Body of pancreas (tissue), 4 donors: ENCODE measurements at regions of chr10 and their contacts with region 1.

Region 1: DNA sequence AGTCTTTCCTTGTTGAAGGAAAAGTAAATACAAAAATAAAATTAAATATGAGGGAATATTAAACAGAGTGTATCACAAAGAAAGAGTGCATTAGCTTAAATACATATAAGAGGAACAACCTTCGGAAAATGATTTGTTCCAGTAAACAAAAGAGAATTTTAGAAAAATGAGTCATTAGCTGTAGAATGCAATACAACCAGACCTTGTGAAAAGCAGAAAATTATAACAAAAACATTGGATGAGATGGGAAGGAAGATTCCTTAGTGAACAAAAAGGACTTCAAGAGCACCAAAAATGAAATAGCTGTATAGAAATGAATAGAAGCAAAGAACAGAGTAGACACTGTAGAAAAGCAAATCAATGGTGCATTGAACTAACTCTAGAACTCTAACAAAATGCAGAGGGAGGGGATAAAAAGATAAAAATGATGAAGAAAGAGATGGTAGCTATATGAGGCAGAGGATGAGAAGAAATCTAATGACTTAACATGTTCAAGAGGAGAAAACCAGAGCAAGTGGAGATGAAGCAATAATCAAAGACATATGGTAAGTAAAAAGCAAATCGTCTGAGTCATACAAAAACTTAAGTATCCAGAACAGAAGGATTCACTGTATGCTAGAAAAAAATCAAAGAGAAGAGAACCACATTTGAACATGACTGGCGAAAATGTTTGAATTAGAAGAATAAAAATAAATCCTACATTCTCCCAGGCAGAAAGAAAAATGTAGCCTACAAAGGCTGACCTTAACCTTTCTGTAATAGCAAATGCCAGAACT is 190.5 kb downstream of the TMEM26 start:
- DNase-seq: no peak
- ATAC-seq: no peak
- H3K4me3 ChIP-seq: no peak overlapping the region
- H3K27ac ChIP-seq: no peak overlapping the region
- H3K4me1 ChIP-seq: no peaks in the 10 kb centered on the region
- H3K27me3 ChIP-seq: no peaks in the 10 kb centered on the region
- CTCF ChIP-seq: no peak
- POLR2A ChIP-seq: no peak

Region 2: DNA sequence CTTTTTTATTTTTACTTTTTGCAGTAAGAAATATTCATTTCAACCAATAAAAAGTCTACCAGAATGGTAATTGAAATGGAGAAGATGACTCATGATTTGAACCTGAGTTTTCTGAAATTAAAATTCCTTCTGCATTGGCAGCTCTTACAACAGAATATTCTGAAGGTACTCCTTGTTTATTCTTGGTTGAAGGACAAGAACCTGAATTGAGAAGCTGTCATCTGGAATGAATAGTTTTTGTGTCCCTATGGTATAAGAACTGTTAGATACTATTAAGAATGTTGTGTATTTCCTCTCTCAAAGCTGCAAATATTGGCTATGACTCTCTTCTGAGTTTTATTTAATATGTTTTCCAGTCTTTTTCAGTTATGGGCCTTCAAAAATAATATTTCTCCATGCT is 428.3 kb before region 1 on chr10:
- intact Hi-C with region 1: loop called (anchors 10 kb)
- DNase-seq: no peak
- ATAC-seq: no peak
- H3K4me3 ChIP-seq: no peak overlapping the region
- H3K27ac ChIP-seq: no peak overlapping the region
- H3K4me1 ChIP-seq: no peaks in the 10 kb centered on the region
- H3K27me3 ChIP-seq: no peaks in the 10 kb centered on the region
- CTCF ChIP-seq: no peak
- POLR2A ChIP-seq: no peak

Region 3: DNA sequence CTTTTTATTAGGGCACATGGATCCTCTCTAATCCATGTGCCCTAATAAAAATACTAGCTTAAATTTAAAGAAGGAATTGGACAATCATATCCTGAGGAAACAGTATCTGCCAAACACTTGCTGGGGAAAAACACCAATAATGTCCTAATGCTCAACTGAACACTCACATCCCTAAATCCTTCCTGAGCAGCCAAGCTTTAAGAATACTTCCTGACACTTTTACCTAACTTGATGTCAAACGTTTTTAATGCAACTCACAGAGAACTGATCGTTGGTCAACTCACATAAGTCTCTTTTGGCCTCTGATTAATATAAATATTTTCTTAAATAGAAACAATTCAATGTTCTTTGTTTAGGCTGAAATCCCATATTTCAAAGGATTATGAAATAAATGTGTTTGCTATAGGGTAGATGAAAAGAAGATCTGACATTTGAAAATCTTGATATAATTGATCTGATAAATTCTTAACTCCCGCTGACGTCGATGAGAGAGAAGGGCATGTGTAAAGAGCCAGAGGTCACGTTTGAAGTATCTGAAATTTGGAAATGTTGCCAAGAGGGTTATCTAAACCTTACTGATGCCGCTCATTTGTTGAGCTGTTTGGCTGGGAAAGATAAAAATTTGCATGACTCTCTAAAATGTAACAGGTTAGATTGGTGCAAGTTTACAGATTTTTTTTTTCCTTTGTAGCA is 195.9 kb before region 1 on chr10:
- intact Hi-C with region 1: no loop called
- DNase-seq: no peak
- ATAC-seq: no peak
- H3K4me3 ChIP-seq: no peak overlapping the region
- H3K27ac ChIP-seq: no peak overlapping the region
- H3K4me1 ChIP-seq: peaks cover 5% of the 10 kb centered on the region
- H3K27me3 ChIP-seq: no peaks in the 10 kb centered on the region
- CTCF ChIP-seq: no peak
- POLR2A ChIP-seq: no peak